WTC11 (cell line): ENCODE measurements at regions of chr19 and their contacts with region 1.

Region 1: DNA sequence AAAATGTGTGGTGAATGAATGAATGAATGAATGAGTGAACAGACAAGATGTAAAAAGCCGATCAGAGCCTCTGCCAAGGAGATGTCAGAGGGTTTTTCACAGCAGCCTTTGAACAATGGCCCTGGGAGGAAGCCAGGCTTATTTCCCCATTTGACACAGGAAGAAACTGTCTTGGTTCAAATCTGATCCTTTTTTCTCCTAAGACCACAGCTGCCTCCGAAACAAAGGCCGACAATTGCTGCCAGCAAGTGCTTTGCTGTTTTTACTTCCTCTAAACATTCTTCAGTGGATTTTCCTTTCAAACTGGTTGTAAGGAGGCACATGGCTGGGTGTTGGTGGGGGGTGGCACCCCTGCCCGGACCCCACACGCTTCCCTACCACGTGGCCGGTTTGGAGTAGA is 44.2 kb upstream of the HOMER3 start:
- DNase-seq: no peak
- ATAC-seq: no peak
- H3K4me3 Mint-ChIP-seq: no peak overlapping the region
- H3K27ac Mint-ChIP-seq: no peak overlapping the region
- H3K4me1 Mint-ChIP-seq: peaks cover 7% of the 10 kb centered on the region; the same call in 1 of the 2 replicates
- H3K27me3 Mint-ChIP-seq: peaks cover 17% of the 10 kb centered on the region
- CTCF ChIP-seq: no peak

Region 2: GRCh38 chr19:18895038-18895823 is 90.0 kb before region 1 on chr19:
- CTCF ChIA-PET with region 1: interaction called, 35 read pairs
- POLR2A ChIA-PET with region 1: interaction called, 4 read pairs
- DNase-seq: peak; percentile 78
- ATAC-seq: peak; percentile 65
- H3K4me3 Mint-ChIP-seq: peak overlapping the region; percentile 72
- H3K27ac Mint-ChIP-seq: no peak overlapping the region
- H3K4me1 Mint-ChIP-seq: no peaks in the 10 kb centered on the region
- H3K27me3 Mint-ChIP-seq: peaks cover 16% of the 10 kb centered on the region
- CTCF ChIP-seq: peak; percentile 15; the same call in 1 of the 2 replicates

Region 3: DNA sequence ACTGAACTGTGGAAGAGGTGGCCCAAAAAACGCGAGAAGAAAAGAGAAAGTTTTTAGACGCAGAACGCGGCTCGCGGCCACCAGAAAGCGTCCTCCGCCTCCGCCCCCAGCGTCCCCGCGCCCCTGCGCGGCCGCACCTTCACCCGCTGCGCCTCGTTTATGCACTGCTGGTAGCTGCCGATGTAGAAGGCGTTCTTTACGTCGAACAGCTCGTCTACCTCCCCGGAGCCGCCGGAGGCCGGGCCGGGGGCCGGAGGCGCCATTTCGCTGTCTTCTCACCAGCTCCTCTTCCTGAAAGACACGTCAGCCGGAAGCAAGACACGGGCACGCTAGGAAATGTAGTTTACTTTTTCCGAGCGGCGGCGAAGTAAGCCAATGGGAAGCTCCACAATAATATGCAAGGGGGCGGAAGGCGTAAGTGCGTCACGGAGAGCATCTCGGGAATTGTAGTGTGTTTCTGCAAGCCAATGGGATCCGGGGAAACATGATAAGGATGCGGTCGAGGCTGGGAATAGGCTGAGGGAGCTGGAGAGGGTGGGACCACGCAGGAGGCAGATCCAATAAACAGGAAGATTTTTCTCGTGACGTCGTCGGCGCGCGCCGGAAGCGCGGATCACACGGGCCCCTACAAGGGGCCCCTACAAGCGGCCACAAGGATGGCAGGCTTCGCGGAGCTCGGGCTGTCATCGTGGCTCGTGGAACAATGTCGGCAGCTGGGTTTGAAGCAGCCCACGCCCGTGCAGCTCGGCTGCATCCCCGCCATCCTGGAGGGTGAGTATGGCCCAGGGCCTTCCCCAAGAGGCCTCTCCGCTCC is 66.0 kb before region 1 on chr19 and contains the starts of genes COPE and DDX49:
- CTCF ChIA-PET with region 1: interaction called, 23 read pairs
- POLR2A ChIA-PET with region 1: interaction called, 5 read pairs
- DNase-seq: peak; percentile 97
- ATAC-seq: peak; percentile 99
- H3K4me3 Mint-ChIP-seq: peak within 1 kb of the TSS; percentile 99
- H3K27ac Mint-ChIP-seq: peak within 1 kb of the TSS; percentile 93
- H3K4me1 Mint-ChIP-seq: peaks cover 10% of the 10 kb centered on the region
- H3K27me3 Mint-ChIP-seq: no peaks in the 10 kb centered on the region; the same call in 1 of the 2 replicates
- CTCF ChIP-seq: no peak
- total RNA-seq, gene COPE: 224 to 240 TPM (median 228 TPM) in 3 replicates
- total RNA-seq, gene DDX49: 30.1 to 47.9 TPM (median 36.4 TPM) in 3 replicates

Region 4: GRCh38 chr19:18928018-18928805 is 57.0 kb before region 1 on chr19:
- CTCF ChIA-PET with region 1: interaction called, 13 read pairs
- POLR2A ChIA-PET with region 1: interaction called, 3 read pairs
- DNase-seq: no peak
- ATAC-seq: no peak
- H3K4me3 Mint-ChIP-seq: no peak overlapping the region
- H3K27ac Mint-ChIP-seq: no peak overlapping the region
- H3K4me1 Mint-ChIP-seq: peaks cover 3% of the 10 kb centered on the region
- H3K27me3 Mint-ChIP-seq: no peaks in the 10 kb centered on the region
- CTCF ChIP-seq: no peak

Region 5: DNA sequence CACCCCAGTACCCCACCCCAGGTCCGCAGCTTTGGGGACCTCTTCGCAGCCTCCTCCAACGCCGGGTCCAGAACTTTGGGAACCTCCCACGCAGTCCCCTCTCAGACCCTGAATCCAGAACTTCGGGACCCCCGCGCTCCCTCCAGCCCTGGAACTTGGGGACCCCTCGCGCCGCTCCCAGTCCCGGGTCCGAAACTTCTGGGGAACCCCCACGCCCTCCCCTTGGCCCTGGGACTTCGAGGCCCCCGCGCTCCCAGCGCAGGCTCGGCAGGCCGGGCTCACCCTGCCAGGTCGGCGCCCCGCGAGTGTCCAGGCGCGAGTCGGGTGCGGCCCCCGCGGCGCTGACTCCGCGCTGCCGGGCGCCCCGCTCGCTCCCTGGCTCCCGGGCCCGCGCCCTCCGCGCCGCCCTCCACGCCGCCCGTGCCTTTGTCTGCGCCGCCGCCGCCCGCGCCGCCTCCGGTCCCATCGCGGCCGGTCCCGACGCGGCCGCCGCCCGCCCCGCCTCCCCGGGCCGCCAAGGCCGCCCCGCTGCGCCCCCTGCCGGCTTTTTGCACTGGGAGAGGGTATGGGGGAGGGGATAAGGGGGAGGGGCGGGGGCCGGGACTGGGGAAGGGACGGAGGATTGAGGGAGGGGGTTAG is 44.4 kb before region 1 on chr19 and contains the start of gene HOMER3:
- CTCF ChIA-PET with region 1: interaction called, 13 read pairs
- POLR2A ChIA-PET with region 1: no interaction called
- DNase-seq: peak; percentile 71
- ATAC-seq: peak; percentile 29
- H3K4me3 Mint-ChIP-seq: peak within 1 kb of the TSS; percentile 82
- H3K27ac Mint-ChIP-seq: no peak within 1 kb of the TSS; the same call in 1 of the 2 replicates
- H3K4me1 Mint-ChIP-seq: peaks cover 24% of the 10 kb centered on the region
- H3K27me3 Mint-ChIP-seq: peaks cover 34% of the 10 kb centered on the region
- CTCF ChIP-seq: no peak
- total RNA-seq, gene HOMER3: 28.2 to 32.4 TPM (median 32.2 TPM) in 3 replicates

Region 6: DNA sequence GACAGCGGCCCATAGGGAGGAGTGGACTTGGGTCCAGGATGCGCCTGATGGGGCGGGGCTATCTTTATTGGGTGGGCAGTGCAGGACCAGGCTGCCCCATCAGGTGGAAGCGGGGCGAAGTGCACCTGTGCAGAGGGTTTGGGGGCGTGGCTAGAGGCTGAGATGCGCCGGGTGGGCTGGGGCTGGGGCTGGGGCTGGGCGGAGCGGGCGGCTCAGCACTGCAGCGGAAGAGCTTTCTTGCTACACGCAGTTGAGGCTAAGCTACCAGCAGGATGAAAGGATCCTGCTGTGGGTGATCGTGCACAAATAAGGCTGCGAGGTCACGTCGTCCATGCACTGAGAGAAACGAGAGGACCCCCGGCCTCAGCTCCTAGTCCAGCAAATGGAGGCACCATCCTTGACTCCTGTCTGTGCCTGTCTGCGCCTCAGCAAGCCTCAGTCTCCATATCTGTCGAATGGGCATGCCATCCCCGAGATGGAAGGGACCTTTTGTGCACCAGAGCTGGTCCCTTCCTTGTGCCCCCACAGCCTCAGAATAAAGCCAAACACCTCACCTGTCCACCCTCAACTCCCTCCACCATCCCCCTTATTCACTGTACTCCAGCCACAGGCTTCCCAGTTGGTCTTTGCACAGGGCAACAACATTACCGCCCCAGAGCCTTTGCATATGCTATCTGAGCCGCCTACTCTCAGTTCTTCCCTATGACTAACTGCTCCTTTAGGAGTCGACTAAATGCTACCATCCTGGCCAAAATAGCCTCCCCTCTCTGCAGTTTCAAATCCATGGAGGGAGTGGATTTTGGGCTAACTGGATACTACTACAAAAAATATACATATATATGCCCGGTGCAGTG is 23.3 kb before region 1 on chr19:
- CTCF ChIA-PET with region 1: interaction called, 10 read pairs
- POLR2A ChIA-PET with region 1: interaction called, 3 read pairs
- DNase-seq: peak; percentile 97
- ATAC-seq: peak; percentile 99
- H3K4me3 Mint-ChIP-seq: peak overlapping the region; percentile 54
- H3K27ac Mint-ChIP-seq: peak overlapping the region; percentile 79
- H3K4me1 Mint-ChIP-seq: peaks cover 15% of the 10 kb centered on the region
- H3K27me3 Mint-ChIP-seq: peaks cover 28% of the 10 kb centered on the region
- CTCF ChIP-seq: no peak

Region 7: DNA sequence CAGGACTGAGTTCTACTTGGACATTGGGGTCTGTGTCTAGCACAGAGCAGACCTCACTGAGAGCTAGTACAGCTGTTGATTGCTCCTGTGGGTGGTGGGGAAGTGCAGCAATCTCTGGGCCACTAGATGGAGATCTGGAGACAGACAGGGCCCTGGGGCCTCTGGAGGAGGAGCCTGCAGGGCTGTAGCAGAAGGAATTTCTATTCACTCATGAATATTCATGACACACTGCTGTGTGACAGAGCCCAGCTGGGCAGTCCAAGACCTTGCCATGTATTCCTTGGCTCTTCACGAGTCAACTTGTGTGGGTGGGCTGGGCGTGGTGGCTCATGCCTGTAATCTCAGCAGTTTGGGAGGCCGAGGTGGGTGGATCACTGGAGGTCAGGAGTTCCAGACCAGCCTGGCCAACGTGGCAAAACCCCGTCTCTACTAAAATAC is 10.6 kb after region 1 on chr19:
- CTCF ChIA-PET with region 1: interaction called, 47 read pairs
- POLR2A ChIA-PET with region 1: interaction called, 4 read pairs
- DNase-seq: peak; percentile 74
- ATAC-seq: peak; percentile 98
- H3K4me3 Mint-ChIP-seq: no peak overlapping the region
- H3K27ac Mint-ChIP-seq: no peak overlapping the region
- H3K4me1 Mint-ChIP-seq: peaks cover 6% of the 10 kb centered on the region
- H3K27me3 Mint-ChIP-seq: no peaks in the 10 kb centered on the region
- CTCF ChIP-seq: peak; percentile 42

Region 8: DNA sequence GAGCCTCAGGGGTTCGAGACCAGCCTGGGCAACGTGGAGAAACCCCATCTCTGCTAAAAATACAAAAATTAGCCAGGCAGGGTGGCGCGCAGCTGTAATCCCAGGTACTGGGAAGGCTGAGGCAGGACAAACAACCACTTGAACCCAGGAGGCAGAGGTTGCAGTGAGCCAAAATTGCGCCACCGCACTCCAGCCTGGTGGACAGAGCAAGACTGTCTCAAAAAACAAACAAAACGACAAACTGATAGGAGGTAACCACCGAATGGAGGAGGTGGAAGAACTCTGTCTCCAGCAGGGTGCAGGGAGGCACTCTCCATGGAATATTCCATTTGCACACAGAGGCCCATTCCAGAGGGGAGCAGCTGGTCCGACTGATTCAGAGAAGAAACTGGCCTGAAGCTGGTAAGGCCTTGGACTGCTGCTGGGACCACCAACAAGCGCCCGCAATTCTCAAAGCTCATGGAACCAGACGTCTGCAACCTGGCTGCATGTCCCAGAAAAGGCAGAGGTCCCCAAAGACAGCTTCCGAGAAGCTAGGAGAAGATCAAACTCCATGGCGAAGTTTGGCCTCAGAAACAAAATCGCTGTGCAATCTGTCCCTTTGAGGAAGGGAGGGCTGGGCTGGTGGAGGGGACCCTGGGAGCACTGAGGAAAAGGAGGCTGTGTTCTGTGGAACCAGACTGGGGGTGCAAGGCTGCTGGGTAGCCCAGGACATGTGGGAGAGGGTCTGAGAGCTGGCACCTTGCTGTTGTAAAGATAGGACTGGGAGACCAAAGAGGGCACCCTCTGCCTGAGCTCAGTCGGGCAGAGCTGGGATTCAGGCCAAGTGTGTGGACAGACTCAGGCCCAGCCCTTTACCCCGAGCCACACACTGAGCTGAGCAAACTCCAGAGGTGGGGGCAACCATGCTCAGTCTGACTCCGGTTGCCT is 113.7 kb after region 1 on chr19:
- CTCF ChIA-PET with region 1: no interaction called
- POLR2A ChIA-PET with region 1: no interaction called
- DNase-seq: no peak
- ATAC-seq: no peak
- H3K4me3 Mint-ChIP-seq: no peak overlapping the region
- H3K27ac Mint-ChIP-seq: no peak overlapping the region
- H3K4me1 Mint-ChIP-seq: no peaks in the 10 kb centered on the region
- H3K27me3 Mint-ChIP-seq: peaks cover 11% of the 10 kb centered on the region
- CTCF ChIP-seq: no peak